A549 (cell line): ENCODE measurements at regions of chr13 and their contacts with region 1.

Region 1: DNA sequence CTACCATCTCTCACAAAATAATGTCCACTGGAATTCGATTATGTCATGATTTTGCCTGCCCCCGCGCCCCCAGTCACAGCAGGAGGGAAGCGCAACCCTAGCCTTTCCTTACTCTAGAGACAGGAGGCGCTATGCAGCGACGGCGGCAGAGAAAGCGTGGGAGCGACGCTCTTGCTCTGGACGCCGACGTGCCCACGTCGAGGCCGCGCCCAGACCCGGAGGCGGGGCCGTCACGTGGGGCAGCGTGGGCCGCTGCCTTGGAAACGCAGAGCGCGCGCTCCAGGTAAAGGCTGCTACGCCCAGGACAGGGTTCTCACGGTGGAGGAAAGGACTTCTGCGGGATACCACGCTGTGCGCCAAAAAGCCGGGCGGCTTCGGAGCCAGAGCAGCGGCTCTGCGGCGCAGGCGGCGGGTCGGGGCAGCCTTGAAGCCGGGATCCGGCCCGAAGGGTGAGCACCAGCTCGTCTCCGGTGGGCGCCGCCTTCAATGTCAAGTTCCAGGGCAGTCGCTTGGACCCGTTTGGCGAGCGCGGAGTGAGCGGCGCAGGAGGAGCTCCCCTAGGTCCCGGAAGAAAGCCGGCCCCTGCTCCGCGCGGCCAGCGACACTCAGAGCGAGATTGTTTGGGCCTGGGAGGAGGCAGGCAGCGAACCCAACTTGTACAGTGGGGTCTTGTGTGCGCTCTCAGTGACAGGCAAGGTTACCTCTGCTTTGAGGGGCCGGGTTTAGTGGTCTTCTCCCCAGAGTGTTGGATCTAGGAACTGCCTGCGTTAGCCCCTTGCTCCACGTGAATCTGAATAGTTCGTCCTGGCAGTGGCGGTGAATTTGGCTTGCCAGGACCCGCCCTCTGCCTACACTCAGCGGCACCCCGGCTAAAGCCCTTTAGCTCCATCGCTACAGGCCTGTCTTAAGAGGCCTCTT is 121.7 kb downstream of the MRPL57 start:
- DNase-seq: peak; percentile 64 to 89
- ATAC-seq: peak; percentile 97 to 98
- H3K4me3 ChIP-seq: peak overlapping the region; percentile 70
- H3K27ac ChIP-seq: peak overlapping the region; percentile 53 to 86
- H3K4me1 ChIP-seq: peaks cover 7% of the 10 kb centered on the region; the same call in 1 of the 3 replicates
- CTCF ChIP-seq: peak; percentile 62
- EP300 ChIP-seq: no peak
- POLR2A ChIP-seq: peak; percentile 43
- RAD21 ChIP-seq: no peak

Region 2: GRCh38 chr13:21310221-21310620 is 12.0 kb after region 1 on chr13:
- CTCF ChIA-PET with region 1: interaction called, 11 read pairs
- POLR2A ChIA-PET with region 1: no interaction called
- DNase-seq: no peak
- ATAC-seq: no peak
- H3K4me3 ChIP-seq: no peak overlapping the region
- H3K27ac ChIP-seq: no peak overlapping the region
- H3K4me1 ChIP-seq: no peaks in the 10 kb centered on the region
- CTCF ChIP-seq: no peak
- EP300 ChIP-seq: no peak
- POLR2A ChIP-seq: no peak
- RAD21 ChIP-seq: no peak

Region 3: GRCh38 chr13:21458813-21459701 is 160.9 kb after region 1 on chr13 and contains the start of gene ZDHHC20:
- CTCF ChIA-PET with region 1: interaction called, 10 read pairs
- POLR2A ChIA-PET with region 1: no interaction called
- DNase-seq: peak; percentile 50 to 75
- ATAC-seq: peak; percentile 89 to 91
- H3K4me3 ChIP-seq: peak within 1 kb of the TSS; percentile 75
- H3K27ac ChIP-seq: peak within 1 kb of the TSS; percentile 89 to 99
- H3K4me1 ChIP-seq: peaks cover 13% of the 10 kb centered on the region; the same call in 2 of the 3 replicates
- CTCF ChIP-seq: no peak
- EP300 ChIP-seq: no peak
- POLR2A ChIP-seq: peak; percentile 63
- RAD21 ChIP-seq: no peak
- polyA plus RNA-seq, gene ZDHHC20: 40.9 and 57.0 TPM in 2 replicates

Region 4: DNA sequence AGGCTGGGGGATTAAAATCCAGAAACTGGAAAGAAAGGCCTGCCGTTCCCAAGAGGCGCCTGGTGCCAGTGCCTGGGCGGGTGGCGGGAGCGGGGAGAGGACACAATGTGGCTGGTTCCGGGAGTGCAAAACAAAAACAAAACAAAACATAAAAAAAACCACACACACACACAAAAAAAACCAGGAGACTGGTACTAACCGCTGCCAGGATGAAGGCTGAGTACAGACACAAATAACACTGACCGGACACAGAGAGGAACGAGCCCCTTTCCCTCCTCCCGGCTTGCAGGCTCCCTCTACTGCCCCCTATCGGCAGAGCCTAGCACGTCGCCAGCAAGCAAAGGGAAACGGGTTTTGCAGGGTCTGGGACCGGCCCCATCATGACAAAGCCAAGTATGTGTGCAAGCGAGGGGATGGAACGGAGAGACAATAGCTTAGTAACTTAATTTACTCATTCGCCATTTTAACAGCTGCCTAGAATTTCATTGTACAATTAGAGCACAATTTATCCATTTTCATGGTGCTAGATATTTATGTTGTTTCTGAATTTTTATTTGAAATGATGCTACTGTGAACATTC is 178.8 kb after region 1 on chr13:
- CTCF ChIA-PET with region 1: interaction called, 50 read pairs
- POLR2A ChIA-PET with region 1: no interaction called
- DNase-seq: peak; percentile 22 to 81
- ATAC-seq: peak; percentile 79 to 91
- H3K4me3 ChIP-seq: peak overlapping the region; percentile 43
- H3K27ac ChIP-seq: peak overlapping the region; percentile 59 to 83; a peak in 5 of 6 replicates
- H3K4me1 ChIP-seq: no peaks in the 10 kb centered on the region
- CTCF ChIP-seq: peak; percentile 79
- EP300 ChIP-seq: no peak
- POLR2A ChIP-seq: no peak
- RAD21 ChIP-seq: peak; percentile 59 to 64